Right cardiac atrium (tissue), 5 donors: ENCODE measurements at regions of chr2 and their contacts with region 1.

Region 1: DNA sequence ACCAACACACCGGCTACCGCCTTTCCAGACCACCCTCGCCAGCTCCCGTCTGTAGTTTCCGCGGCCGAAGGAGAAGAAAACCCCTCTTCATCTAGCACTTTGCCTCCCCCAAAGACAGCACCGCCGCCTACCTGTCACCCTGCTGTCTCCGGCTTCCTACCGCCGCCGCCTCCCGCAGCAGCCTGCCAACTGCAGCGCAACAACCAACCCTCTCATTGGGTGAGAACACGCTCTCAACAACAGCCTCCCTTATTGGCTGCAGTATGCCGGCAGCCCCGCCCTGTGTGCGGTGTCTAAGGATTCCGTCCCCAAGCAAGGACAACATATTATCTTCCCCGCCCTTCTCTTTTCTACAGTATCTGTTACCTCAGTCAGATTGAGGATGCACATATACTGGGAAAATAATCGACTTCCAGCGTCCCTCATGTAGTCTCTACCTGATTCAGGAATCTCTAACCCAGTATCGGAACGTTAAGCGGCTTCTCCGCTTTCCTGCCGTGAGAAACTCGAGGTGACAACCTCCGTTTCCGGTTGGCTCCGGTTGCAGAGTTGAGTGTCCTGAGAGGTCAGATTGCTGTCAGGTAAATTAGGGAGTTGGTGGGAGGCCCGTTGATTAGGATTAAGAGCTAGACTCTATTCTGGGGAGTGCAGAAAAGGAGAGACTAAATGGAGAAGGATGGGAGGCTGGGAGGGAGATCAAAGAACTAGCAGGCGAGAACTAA is at the starts of genes HYCC2 and NDUFB3:
- DNase-seq: peak; percentile 89 to 96 (median 95)
- ATAC-seq: peak; percentile 99 to 100
- H3K4me3 ChIP-seq: peak within 1 kb of the TSS; percentile 87
- H3K27ac ChIP-seq: peak within 1 kb of the TSS; percentile 80
- H3K4me1 ChIP-seq: no peaks in the 10 kb centered on the region
- H3K27me3 ChIP-seq: no peaks in the 10 kb centered on the region
- total RNA-seq, gene HYCC2: 9.7 to 17.2 (median 13.4) TPM
- total RNA-seq, gene NDUFB3: 296 to 384 (median 313) TPM

Region 2: DNA sequence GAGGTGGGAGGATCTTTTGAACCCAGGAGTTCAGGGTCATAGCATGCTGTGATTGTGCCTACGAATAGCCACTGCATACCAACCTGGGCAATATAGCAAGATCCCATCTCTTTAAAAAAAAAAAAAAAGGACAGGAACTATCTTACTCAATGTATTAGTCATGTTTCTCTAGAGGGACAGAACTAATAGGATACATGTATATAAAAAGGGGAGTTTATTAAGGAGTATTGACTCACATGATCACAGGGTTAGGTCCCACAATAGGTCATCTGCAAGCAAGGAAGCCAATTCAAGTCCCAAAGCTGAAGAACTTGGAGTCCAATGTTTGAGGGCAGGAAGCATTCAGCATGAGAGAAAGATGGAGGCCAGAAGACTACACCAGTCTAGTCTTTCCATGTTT is 92.5 kb after region 1 on chr2:
- intact Hi-C with region 1: loop called in 2 of 4 experiments (anchors 5 to 10 kb)
- DNase-seq: no peak
- ATAC-seq: no peak
- H3K4me3 ChIP-seq: no peak overlapping the region
- H3K27ac ChIP-seq: no peak overlapping the region
- H3K4me1 ChIP-seq: no peaks in the 10 kb centered on the region
- H3K27me3 ChIP-seq: no peaks in the 10 kb centered on the region